PC-3 (cell line): ENCODE measurements at regions of chr5 and their contacts with region 1.

Region 1: GRCh38 chr5:92599217-92599810 is 981.7 kb downstream of the NR2F1-AS1 start:
- DNase-seq: no peak
- ATAC-seq: no peak
- H3K4me3 ChIP-seq: no peak overlapping the region
- H3K27ac ChIP-seq: no peak overlapping the region
- H3K4me1 ChIP-seq: no peaks in the 10 kb centered on the region
- H3K27me3 ChIP-seq: no peaks in the 10 kb centered on the region
- CTCF ChIP-seq: no peak

Region 2: DNA sequence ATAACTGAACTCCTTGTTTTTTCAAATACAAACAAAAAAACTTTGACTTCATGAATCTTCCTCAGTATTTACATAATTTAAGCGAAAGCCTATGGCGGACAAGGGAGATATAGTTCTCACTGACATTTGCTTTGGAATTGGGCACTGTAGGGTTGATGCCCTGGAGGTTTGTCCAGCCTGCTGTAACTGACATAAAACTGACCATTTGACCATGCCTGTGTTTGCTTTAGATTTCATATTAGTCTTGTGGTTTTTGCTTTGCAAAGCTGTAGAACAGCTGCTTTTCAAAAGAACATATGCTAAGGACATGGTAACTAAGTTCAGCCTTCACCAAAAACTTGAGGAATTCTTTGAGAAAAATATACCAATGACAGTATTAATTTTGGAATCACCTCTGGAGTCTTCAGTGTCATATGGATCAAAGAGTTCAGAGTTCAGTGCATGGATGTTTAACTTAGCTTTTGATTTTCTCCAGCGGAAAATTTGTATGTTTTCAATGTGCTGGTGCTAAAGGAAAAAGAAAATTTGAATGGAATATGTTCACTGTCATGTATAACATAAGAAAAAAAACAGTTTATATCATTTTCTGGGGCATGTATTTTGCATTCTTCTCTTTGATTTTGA is 31.4 kb before region 1 on chr5:
- CTCF ChIA-PET with region 1: no interaction called
- POLR2A ChIA-PET with region 1: no interaction called
- intact Hi-C with region 1: loop called (anchors 2 kb)
- DNase-seq: no peak
- ATAC-seq: no peak
- H3K4me3 ChIP-seq: no peak overlapping the region
- H3K27ac ChIP-seq: no peak overlapping the region
- H3K4me1 ChIP-seq: peaks cover under 1% of the 10 kb centered on the region; the same call in 1 of the 2 replicates
- H3K27me3 ChIP-seq: no peaks in the 10 kb centered on the region
- CTCF ChIP-seq: no peak

Region 3: DNA sequence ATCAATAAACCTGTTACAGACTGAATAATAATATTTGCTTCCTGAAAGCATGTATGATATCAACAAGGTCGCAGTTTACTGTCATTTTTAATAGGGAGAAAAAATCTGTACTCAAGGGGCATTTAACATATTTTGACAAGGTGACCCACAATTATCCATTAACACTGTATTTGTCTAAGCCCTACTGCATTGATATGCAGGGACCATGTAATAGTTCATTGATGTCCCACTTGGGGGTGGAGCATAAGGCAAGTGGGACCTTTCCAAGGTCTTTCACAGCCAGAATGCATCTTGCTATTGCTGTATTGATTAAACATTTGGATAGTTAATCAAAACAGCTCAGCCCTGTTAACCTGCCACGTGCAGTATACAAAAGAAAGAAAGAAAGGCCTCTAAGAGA is 479.7 kb after region 1 on chr5:
- CTCF ChIA-PET with region 1: no interaction called
- POLR2A ChIA-PET with region 1: no interaction called
- intact Hi-C with region 1: no loop called
- DNase-seq: no peak
- ATAC-seq: peak; percentile 35; the same call in 1 of the 2 replicates
- H3K4me3 ChIP-seq: peak overlapping the region; percentile 7; the same call in 1 of the 2 replicates
- H3K27ac ChIP-seq: peak overlapping the region; percentile 90
- H3K4me1 ChIP-seq: peaks cover 36% of the 10 kb centered on the region
- H3K27me3 ChIP-seq: no peaks in the 10 kb centered on the region
- CTCF ChIP-seq: no peak